Mammary epithelial cell (primary cell): ENCODE measurements at regions of chr22 and their contacts with region 1.

Region 1: GRCh38 chr22:31399211-31400028 is at the start of gene DRG1:
- DNase-seq: peak; percentile 92
- H3K4me3 ChIP-seq: peak within 1 kb of the TSS; percentile 74 to 86 (median 83)
- H3K27ac ChIP-seq: peak within 1 kb of the TSS; percentile 77
- H3K4me1 ChIP-seq: peaks cover 5% of the 10 kb centered on the region
- H3K27me3 ChIP-seq: no peaks in the 10 kb centered on the region
- CTCF ChIP-seq: no peak
- total RNA-seq, gene DRG1: 64.8 to 65.3 TPM

Region 2: DNA sequence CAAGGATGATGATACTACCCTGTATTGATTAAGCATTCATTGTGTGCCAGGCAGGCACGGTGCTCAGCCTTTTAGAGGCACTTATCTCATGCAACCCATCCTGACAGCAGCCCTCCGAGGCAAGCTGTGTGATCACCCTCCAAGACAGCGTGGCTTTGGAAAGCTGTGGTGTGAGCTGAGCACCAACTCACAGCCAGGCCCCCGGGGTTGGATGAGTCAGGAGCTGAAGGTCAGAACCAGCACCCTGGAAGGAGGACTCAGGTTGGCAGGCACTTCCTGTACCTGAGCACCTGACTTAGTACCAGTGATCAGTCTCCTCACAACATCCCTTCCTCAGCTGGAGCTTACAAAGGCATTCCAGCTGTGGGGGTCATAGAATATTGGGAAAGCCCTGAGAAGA is 62.3 kb before region 1 on chr22:
- CTCF ChIA-PET with region 1: no interaction called
- dilution Hi-C with region 1: loop called (anchors 5 kb)
- in situ Hi-C with region 1: no loop called
- intact Hi-C with region 1: no loop called
- DNase-seq: peak; percentile 72
- H3K4me3 ChIP-seq: no peak overlapping the region
- H3K27ac ChIP-seq: no peak overlapping the region
- H3K4me1 ChIP-seq: peaks cover 15% of the 10 kb centered on the region
- H3K27me3 ChIP-seq: no peaks in the 10 kb centered on the region
- CTCF ChIP-seq: no peak

Region 3: GRCh38 chr22:31345331-31346254 is 53.8 kb before region 1 on chr22:
- CTCF ChIA-PET with region 1: no interaction called
- dilution Hi-C with region 1: no loop called
- in situ Hi-C with region 1: no loop called
- intact Hi-C with region 1: loop called (anchors 1 kb)
- DNase-seq: peak; percentile 69
- H3K4me3 ChIP-seq: peak overlapping the region; percentile 54 to 66 (median 55)
- H3K27ac ChIP-seq: no peak overlapping the region
- H3K4me1 ChIP-seq: peaks cover 38% of the 10 kb centered on the region
- H3K27me3 ChIP-seq: no peaks in the 10 kb centered on the region
- CTCF ChIP-seq: peak; percentile 63 to 77

Region 4: DNA sequence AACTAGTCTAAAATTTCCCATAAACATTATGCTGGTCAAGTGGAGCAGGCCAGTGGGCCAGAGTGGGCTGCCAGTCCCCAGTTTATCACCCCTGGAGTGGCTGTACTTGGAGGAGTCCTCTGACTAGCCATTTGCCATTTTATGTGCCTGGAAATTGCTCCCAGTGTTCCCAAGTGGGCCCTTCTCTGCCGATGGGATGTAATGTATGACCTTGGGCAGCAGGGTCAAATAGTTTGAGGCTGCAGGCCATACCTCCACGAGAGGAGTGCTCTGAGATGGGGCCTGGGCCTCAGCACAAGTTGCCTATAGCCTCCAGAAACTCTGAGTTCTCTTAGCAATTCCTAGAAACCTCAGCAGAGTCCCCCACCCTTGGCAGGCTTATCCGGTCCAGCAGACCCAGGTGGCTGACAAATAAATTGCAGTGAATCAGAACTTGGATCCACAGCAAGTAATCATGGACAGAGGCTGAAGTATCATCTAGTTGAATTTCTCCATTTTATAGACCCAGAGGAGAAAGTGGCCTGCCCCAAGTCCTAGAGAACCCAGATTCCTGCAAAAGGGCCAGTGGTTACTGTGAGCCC is 35.4 kb before region 1 on chr22:
- CTCF ChIA-PET with region 1: no interaction called
- dilution Hi-C with region 1: no loop called
- in situ Hi-C with region 1: no loop called
- intact Hi-C with region 1: no loop called
- DNase-seq: no peak
- H3K4me3 ChIP-seq: no peak overlapping the region
- H3K27ac ChIP-seq: no peak overlapping the region
- H3K4me1 ChIP-seq: no peaks in the 10 kb centered on the region
- H3K27me3 ChIP-seq: no peaks in the 10 kb centered on the region
- CTCF ChIP-seq: no peak

Region 5: GRCh38 chr22:31439808-31440207 is 40.4 kb after region 1 on chr22:
- CTCF ChIA-PET with region 1: no interaction called
- dilution Hi-C with region 1: loop called (anchors 5 kb)
- in situ Hi-C with region 1: no loop called
- intact Hi-C with region 1: no loop called
- DNase-seq: no peak
- H3K4me3 ChIP-seq: no peak overlapping the region
- H3K27ac ChIP-seq: no peak overlapping the region
- H3K4me1 ChIP-seq: peaks cover 10% of the 10 kb centered on the region
- H3K27me3 ChIP-seq: no peaks in the 10 kb centered on the region
- CTCF ChIP-seq: no peak